GM12878 (cell line): ENCODE measurements at regions of chr17 and their contacts with region 1.

Region 1: GRCh38 chr17:32783602-32784001 is 93.3 kb downstream of the MYO1D start:
- DNase-seq: peak; percentile 32
- ATAC-seq: peak; percentile 82
- H3K4me3 ChIP-seq: no peak overlapping the region
- H3K27ac ChIP-seq: no peak overlapping the region
- H3K4me1 ChIP-seq: peaks cover 3% of the 10 kb centered on the region
- H3K27me3 ChIP-seq: no peaks in the 10 kb centered on the region
- CTCF ChIP-seq: peak; percentile 41 to 80 (median 60); a peak in 5 of 6 replicates
- EP300 ChIP-seq: no peak
- POLR2A ChIP-seq: no peak
- RAD21 ChIP-seq: peak; percentile 88

Region 2: DNA sequence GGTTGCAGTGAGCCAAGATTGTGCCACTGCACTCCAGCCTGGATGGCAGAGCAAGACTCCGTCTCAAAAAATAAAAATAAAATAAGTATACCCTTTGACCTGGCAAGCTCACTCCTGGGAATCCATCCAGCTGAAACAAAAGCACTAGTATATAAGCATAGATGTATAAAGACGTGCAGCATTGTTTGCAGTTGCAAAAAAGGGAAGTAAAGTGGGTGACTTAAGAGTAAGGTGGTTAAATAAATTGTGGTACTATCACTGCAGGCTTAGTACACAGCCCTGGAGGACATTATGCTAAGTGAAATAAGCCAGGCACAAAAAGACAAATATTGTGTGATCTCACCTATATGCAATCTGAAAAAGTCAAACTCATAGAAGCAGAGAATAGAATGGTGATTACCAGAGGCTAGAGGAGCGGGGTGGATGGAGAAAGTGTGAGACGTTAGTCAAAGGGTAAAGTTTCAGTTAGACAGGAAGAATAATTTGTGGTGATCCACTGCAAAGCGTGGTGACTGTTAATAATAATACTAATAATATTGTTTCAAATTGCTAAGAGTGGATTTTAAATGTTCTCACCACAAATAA is 19.7 kb before region 1 on chr17:
- CTCF ChIA-PET with region 1: interaction called, 15 read pairs
- POLR2A ChIA-PET with region 1: no interaction called
- RAD21 ChIA-PET with region 1: no interaction called
- SMC1A ChIA-PET with region 1: interaction called, 7 read pairs
- in situ Hi-C with region 1: no loop called
- intact Hi-C with region 1: no loop called
- DNase-seq: no peak
- ATAC-seq: peak; percentile 60
- H3K4me3 ChIP-seq: no peak overlapping the region
- H3K27ac ChIP-seq: no peak overlapping the region
- H3K4me1 ChIP-seq: no peaks in the 10 kb centered on the region
- H3K27me3 ChIP-seq: no peaks in the 10 kb centered on the region
- CTCF ChIP-seq: no peak
- EP300 ChIP-seq: 0 out of 4 replicates have a peak, but pooled peaks have one; percentile 5 to 36
- POLR2A ChIP-seq: no peak
- RAD21 ChIP-seq: no peak

Region 3: GRCh38 chr17:32803544-32803943 is 19.9 kb after region 1 on chr17:
- CTCF ChIA-PET with region 1: interaction called, 13 read pairs
- POLR2A ChIA-PET with region 1: no interaction called
- RAD21 ChIA-PET with region 1: interaction called, 11 read pairs
- SMC1A ChIA-PET with region 1: interaction called, 14 read pairs
- in situ Hi-C with region 1: no loop called
- intact Hi-C with region 1: no loop called
- DNase-seq: no peak
- ATAC-seq: no peak
- H3K4me3 ChIP-seq: no peak overlapping the region
- H3K27ac ChIP-seq: no peak overlapping the region
- H3K4me1 ChIP-seq: no peaks in the 10 kb centered on the region
- H3K27me3 ChIP-seq: no peaks in the 10 kb centered on the region
- CTCF ChIP-seq: no peak
- EP300 ChIP-seq: no peak
- POLR2A ChIP-seq: no peak
- RAD21 ChIP-seq: no peak

Region 4: DNA sequence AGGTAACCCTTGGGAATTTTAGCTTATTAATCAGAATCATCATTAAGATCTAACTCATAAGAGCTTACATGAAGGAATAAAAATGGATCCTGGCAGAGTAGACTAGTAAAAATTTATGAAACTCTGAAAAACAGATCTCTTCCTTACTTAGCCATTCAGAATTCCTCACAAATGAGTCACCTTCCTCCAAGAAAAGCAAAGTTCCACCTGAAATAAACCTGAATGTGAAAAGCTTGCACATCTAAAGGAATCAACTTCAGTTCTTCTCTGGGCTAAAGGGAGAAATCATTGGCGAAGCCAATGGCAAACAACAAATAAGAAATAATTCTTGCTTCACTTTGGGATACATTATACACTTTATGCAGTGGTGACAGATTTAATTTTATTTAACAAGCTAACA is 70.6 kb after region 1 on chr17:
- CTCF ChIA-PET with region 1: interaction called, 11 read pairs
- POLR2A ChIA-PET with region 1: no interaction called
- RAD21 ChIA-PET with region 1: interaction called, 4 read pairs
- SMC1A ChIA-PET with region 1: interaction called, 17 read pairs
- in situ Hi-C with region 1: no loop called
- intact Hi-C with region 1: no loop called
- DNase-seq: no peak
- ATAC-seq: no peak
- H3K4me3 ChIP-seq: no peak overlapping the region
- H3K27ac ChIP-seq: no peak overlapping the region
- H3K4me1 ChIP-seq: no peaks in the 10 kb centered on the region
- H3K27me3 ChIP-seq: no peaks in the 10 kb centered on the region
- CTCF ChIP-seq: no peak
- EP300 ChIP-seq: no peak
- POLR2A ChIP-seq: no peak
- RAD21 ChIP-seq: no peak

Region 5: GRCh38 chr17:32877164-32877764 is 93.7 kb after region 1 on chr17:
- CTCF ChIA-PET with region 1: interaction called, 335 read pairs
- POLR2A ChIA-PET with region 1: interaction called, 29 read pairs
- RAD21 ChIA-PET with region 1: interaction called, 183 read pairs
- SMC1A ChIA-PET with region 1: interaction called, 248 read pairs
- in situ Hi-C with region 1: loop called (anchors 5 kb)
- intact Hi-C with region 1: loop called (anchors 1 kb)
- DNase-seq: peak; percentile 37
- ATAC-seq: peak; percentile 92
- H3K4me3 ChIP-seq: peak overlapping the region; percentile 51
- H3K27ac ChIP-seq: peak overlapping the region; percentile 66
- H3K4me1 ChIP-seq: no peaks in the 10 kb centered on the region
- H3K27me3 ChIP-seq: no peaks in the 10 kb centered on the region
- CTCF ChIP-seq: peak; percentile 83 to 94 (median 88); a peak in 5 of 6 replicates
- EP300 ChIP-seq: no peak
- POLR2A ChIP-seq: no peak
- RAD21 ChIP-seq: peak; percentile 80

Region 6: GRCh38 chr17:32936894-32937500 is 153.4 kb after region 1 on chr17:
- CTCF ChIA-PET with region 1: interaction called, 66 read pairs
- POLR2A ChIA-PET with region 1: no interaction called
- RAD21 ChIA-PET with region 1: interaction called, 37 read pairs
- SMC1A ChIA-PET with region 1: interaction called, 62 read pairs
- in situ Hi-C with region 1: loop called (anchors 5 kb)
- intact Hi-C with region 1: loop called (anchors 1 kb)
- DNase-seq: no peak
- ATAC-seq: peak; percentile 97
- H3K4me3 ChIP-seq: no peak overlapping the region
- H3K27ac ChIP-seq: no peak overlapping the region
- H3K4me1 ChIP-seq: no peaks in the 10 kb centered on the region
- H3K27me3 ChIP-seq: no peaks in the 10 kb centered on the region; a peak in 1 of 4 replicates
- CTCF ChIP-seq: peak; percentile 84 to 89 (median 86)
- EP300 ChIP-seq: no peak
- POLR2A ChIP-seq: no peak
- RAD21 ChIP-seq: peak; percentile 68